ENCODE measurements at regions of chrX and their contacts with region 1.

Region 1: DNA sequence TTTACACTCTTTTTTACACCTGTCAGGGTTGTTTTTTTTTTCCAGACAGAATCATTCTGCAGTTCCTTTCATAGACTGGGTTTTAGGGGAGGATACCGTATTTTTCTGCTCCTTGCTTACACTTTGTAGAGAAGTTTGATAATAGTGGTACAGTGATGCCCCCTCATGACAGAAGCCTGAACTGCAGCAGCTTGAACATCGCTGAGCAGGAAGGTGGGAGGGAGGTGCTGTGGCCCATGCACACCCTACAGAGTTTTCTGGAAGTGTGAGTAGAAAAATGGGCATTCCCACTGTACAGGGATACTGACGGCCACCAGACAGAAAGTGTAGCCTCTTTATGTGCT is 54.5 kb downstream of the RAB40A start:
- DNase-seq: peak in 3 of 5 donors; percentile 41 to 59 (median 52)
- ATAC-seq: peak in 3 of 4 donors; percentile 90 to 96 (median 91)
- H3K4me3 ChIP-seq: peak overlapping the region in 10 of 12 donors; percentile 15 to 55 (median 36)
- H3K27ac ChIP-seq: no peak overlapping the region
- H3K4me1 ChIP-seq: no peaks in the 10 kb centered on the region
- H3K27me3 ChIP-seq: peaks cover 0 to 10% (median 0%) of the 10 kb centered on the region in 9 donors
- CTCF ChIP-seq: peak; percentile 49 to 78 (median 68)
- POLR2A ChIP-seq: no peak

Region 2: DNA sequence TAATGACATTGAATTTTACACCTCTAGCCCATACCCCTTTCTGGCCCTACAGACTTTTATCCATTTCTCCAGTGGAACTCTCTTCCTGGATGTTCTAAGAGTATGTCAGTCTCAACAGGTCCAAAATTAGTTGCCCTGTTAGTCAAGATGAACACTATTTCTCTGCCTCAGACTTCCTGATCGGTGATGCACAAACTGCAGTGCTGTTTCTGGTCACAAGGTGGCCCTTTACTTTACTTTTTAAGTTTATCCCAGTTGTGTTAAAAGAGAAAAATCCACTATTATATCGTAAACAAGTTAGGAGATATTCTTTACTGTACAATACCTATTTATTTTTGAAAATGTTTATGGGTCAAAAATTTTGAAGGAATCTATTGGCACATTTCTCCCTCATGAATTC is 121.6 kb before region 1 on chrX:
- intact Hi-C with region 1: loop called in 9 of 10 experiments (anchors 1 to 5 kb)
- DNase-seq: no peak
- ATAC-seq: peak in 1 of 4 donors; percentile 29
- H3K4me3 ChIP-seq: no peak overlapping the region
- H3K27ac ChIP-seq: no peak overlapping the region
- H3K4me1 ChIP-seq: no peaks in the 10 kb centered on the region
- H3K27me3 ChIP-seq: peaks cover 0 to 45% (median 0%) of the 10 kb centered on the region in 9 donors
- CTCF ChIP-seq: peak; percentile 50 to 73 (median 65)
- POLR2A ChIP-seq: no peak

Region 3: DNA sequence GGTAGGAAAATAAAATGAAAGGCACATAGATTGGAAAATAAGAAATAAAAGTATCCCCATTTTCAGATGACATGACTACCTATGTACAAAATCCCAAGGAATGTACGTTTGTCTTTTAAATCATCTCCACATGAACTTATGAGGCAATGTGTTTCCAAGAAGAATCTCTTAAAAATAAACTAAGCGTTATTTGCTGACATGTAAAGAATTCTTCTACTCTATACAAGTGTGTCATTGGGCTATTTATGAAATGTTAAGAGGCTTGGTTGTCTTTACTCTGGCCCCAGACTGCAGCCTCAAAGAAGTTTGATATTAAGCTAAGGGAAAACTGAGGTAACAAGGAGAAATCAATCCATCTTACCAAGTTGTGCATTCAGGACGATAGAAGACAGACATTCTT is 71.3 kb before region 1 on chrX:
- intact Hi-C with region 1: no loop called
- DNase-seq: no peak
- ATAC-seq: no peak
- H3K4me3 ChIP-seq: no peak overlapping the region
- H3K27ac ChIP-seq: no peak overlapping the region
- H3K4me1 ChIP-seq: no peaks in the 10 kb centered on the region
- H3K27me3 ChIP-seq: no peaks in the 10 kb centered on the region
- CTCF ChIP-seq: no peak
- POLR2A ChIP-seq: no peak